Naive thymus-derived CD4-positive, alpha-beta T cell (primary cell): ENCODE measurements at regions of chr11 and their contacts with region 1.

Region 1: DNA sequence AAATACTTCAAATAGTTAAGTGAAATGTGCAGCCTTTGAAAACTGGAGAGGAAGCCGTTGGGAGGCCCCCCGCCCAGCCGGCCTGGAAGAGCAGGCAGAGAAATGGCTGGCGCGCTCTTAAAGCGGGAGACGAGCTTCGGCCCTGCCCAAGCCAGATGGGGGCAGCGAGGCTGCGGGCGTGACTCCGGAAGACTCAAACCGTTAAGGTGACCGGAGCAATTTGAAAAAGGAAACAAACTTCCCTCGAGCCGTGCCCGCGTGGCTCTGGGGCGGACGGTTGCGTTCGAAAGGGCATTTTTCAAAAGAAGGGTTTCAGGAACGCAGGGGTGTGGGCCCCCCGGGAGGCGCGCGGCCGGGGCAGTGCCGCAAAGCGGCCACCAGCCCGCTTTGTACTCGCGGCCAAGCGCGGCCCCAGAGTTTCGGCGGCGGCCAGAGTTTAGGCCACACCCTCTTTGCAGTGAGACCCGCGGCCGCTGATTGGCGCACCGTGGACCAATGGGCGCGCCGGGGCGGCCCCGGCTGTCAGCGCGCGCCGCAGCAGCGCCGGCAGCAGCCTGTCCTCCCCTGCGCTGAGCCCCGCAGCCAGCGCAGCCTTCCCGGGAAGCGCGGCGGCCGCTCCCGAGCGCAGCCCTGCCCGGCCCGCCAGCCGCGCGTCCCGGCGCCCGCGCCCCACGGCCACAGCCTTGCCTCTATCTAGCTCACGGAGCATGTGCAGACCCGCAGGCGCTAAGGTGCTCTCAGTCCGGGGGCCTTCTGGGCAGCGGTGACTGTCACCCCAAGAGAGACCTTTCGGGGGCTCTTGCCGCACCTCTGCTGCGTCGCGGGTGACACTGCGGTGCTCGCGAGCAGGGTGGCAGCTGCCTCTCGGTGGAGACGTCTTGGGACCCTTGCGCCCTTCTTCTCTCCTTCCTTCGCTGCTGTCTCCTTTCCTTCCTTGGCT is at the start of gene NAV2:
- DNase-seq: peak; percentile 43 to 80 (median 62)
- ATAC-seq: peak; percentile 98
- H3K4me3 ChIP-seq: peak within 1 kb of the TSS; percentile 81
- H3K4me3 Mint-ChIP-seq: peak within 1 kb of the TSS; percentile 91 to 98 (median 94)
- H3K27ac ChIP-seq: peak within 1 kb of the TSS; percentile 24
- H3K27ac Mint-ChIP-seq: peak within 1 kb of the TSS; percentile 63 to 87 (median 77)
- H3K4me1 ChIP-seq: peaks cover 14 to 18% of the 10 kb centered on the region in 2 donors
- H3K4me1 Mint-ChIP-seq: peaks cover 6 to 27% (median 24%) of the 10 kb centered on the region in 7 donors
- H3K27me3 ChIP-seq: peaks cover 14% of the 10 kb centered on the region in 2 donors
- H3K27me3 Mint-ChIP-seq: peaks cover 23 to 69% (median 33%) of the 10 kb centered on the region in 5 donors
- total RNA-seq, gene NAV2: 0.24 to 2.2 (median 0.48) TPM

Region 2: DNA sequence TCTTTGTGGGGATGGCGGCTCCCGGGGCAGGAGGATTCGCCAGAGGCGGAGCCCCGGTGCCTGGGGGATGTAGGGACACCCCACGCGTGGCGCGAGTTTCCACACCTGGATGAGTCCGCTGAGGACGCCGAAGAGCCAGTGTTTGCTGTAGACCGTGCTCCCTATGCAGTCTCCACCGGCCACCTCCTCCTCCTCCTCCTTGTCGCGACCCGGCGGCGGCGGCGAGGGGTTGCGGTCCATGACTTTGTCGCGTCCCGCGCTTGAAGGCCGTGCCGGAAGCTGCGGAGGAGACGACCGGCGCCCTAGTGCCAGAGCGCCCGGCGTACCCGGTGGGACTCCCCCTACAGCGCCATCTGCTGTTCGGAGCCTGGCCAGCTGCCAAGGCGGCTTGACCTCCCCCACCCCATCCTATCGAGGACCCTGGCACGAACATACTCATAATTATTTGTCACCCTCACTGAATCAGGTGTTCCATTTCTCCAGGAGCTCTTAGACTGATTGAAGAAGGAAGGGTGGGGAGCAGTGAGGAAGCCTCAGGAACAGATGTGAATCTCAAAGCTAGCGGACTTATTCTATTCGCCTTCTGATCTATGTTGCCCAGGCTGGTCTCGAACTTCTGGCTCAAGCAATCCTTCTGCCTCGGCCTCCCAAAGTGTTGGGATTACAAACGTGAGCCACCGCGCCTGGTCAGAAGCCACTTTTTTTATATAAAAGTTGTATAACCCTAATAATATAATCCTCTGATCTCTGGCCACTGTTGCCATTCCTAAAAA is 1606.6 kb before region 1 on chr11 and contains the start of gene SAAL1:
- CTCF ChIA-PET with region 1: no interaction called
- POLR2A ChIA-PET with region 1: no interaction called
- intact Hi-C with region 1: loop called in 1 of 2 experiments (anchors 10 kb)
- DNase-seq: peak; percentile 80 to 95 (median 84)
- ATAC-seq: peak; percentile 99
- H3K4me3 ChIP-seq: peak within 1 kb of the TSS; percentile 93
- H3K4me3 Mint-ChIP-seq: peak within 1 kb of the TSS; percentile 84 to 95 (median 93)
- H3K27ac ChIP-seq: peak within 1 kb of the TSS; percentile 78
- H3K27ac Mint-ChIP-seq: peak within 1 kb of the TSS; percentile 77 to 93 (median 90)
- H3K4me1 ChIP-seq: peaks cover 14 to 15% of the 10 kb centered on the region in 2 donors
- H3K4me1 Mint-ChIP-seq: peaks cover 21 to 54% (median 42%) of the 10 kb centered on the region in 7 donors
- H3K27me3 ChIP-seq: no peaks in the 10 kb centered on the region
- H3K27me3 Mint-ChIP-seq: peaks cover 0 to 15% (median 0%) of the 10 kb centered on the region in 5 donors
- total RNA-seq, gene SAAL1: 16.0 to 25.3 (median 19.3) TPM

Region 3: DNA sequence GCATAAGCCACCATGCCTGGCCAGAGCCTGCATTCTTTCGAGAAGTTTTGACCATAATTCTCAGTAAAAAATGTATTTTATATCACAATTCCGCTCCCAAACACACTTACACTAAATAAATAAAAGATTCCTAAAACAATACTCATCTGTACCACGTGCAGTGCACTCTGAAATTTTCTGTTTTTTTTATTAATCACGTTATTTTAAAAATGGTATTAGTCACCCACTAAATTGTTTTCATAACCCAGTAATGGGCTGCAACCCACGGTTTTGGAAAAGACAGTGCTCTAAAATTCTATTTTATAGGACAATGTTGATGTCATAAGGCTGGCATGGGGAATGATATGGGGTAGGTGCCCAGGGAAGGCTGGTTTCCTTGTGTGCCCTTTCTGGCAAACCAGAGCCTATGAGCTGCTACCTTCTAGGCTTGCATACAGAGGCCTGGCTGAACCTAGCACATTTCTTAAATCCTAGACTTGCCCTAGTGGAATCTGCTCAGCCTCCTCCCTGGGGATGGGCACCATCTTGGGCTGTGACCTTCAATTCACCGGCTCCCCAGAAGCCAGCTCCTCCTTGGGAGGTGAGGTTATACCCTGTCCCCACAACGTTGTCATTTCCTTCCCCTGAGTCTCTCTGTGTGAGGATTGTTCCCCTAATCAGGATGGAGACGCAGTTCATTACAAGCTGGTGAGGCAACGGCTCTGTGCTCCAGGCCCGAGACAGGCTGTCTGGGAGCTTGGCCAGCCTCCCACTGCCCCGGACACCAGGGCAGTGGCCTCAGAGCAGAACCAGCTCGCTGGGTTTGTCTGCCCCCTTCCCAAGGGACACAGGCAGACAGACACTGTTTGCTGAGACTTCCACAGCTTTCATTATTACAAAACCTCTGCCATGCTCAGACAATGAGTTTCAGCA is 116.5 kb before region 1 on chr11:
- CTCF ChIA-PET with region 1: no interaction called
- POLR2A ChIA-PET with region 1: no interaction called
- intact Hi-C with region 1: no loop called
- DNase-seq: no peak
- ATAC-seq: no peak
- H3K4me3 ChIP-seq: no peak overlapping the region
- H3K4me3 Mint-ChIP-seq: no peak overlapping the region
- H3K27ac ChIP-seq: no peak overlapping the region
- H3K27ac Mint-ChIP-seq: no peak overlapping the region
- H3K4me1 ChIP-seq: no peaks in the 10 kb centered on the region
- H3K4me1 Mint-ChIP-seq: no peaks in the 10 kb centered on the region
- H3K27me3 ChIP-seq: no peaks in the 10 kb centered on the region
- H3K27me3 Mint-ChIP-seq: peaks cover 0 to 29% (median 21%) of the 10 kb centered on the region in 5 donors

Region 4: DNA sequence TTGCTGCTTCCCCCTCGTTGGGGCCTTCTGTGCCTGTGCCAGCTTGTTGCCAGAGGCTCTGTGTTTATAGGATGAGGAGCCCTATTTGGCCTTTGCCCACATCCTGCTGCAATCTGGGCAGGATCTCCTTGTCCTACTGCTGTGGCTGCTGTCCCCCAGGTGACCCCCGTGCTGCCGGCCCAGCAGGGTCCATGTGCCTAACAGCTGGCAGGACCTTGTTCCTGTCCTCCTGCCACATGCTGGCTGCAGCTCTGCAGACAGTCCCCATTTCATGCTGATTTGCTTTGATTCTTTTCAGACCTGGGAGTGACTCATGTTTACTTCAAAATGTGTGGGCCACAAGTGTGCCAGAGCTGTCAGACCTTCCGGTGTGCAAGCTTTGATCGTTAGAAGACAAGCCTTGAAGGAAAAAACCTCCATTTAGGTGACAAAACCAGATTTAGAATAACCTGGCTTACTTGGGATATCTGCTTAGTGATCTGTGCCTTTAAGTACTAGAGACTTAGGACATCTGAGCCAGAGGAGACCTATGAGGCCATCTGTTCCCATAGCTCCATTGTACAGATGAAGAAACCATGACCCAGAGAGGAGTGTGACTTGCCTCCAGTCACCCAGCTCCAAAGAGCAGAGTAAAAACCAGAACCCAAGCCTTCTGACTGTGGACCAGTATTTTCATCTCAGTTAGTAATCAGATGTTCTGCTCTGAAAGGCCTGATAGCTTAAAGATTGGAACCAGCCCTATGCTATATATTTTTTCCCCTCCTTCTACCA is 11.2 kb after region 1 on chr11:
- CTCF ChIA-PET with region 1: no interaction called
- POLR2A ChIA-PET with region 1: interaction called, 5 read pairs
- intact Hi-C with region 1: loop called (anchors 1 kb)
- DNase-seq: peak in 5 of 9 donors; percentile 7 to 34 (median 19)
- ATAC-seq: peak; percentile 80
- H3K4me3 ChIP-seq: no peak overlapping the region
- H3K4me3 Mint-ChIP-seq: peak overlapping the region in 8 of 10 donors; percentile 4 to 66 (median 38)
- H3K27ac ChIP-seq: no peak overlapping the region
- H3K27ac Mint-ChIP-seq: peak overlapping the region; percentile 34 to 92 (median 75)
- H3K4me1 ChIP-seq: peaks cover 17 to 25% of the 10 kb centered on the region in 2 donors
- H3K4me1 Mint-ChIP-seq: peaks cover 16 to 30% (median 21%) of the 10 kb centered on the region in 7 donors
- H3K27me3 ChIP-seq: no peaks in the 10 kb centered on the region
- H3K27me3 Mint-ChIP-seq: peaks cover 0 to 25% (median 0%) of the 10 kb centered on the region in 5 donors

Region 5: DNA sequence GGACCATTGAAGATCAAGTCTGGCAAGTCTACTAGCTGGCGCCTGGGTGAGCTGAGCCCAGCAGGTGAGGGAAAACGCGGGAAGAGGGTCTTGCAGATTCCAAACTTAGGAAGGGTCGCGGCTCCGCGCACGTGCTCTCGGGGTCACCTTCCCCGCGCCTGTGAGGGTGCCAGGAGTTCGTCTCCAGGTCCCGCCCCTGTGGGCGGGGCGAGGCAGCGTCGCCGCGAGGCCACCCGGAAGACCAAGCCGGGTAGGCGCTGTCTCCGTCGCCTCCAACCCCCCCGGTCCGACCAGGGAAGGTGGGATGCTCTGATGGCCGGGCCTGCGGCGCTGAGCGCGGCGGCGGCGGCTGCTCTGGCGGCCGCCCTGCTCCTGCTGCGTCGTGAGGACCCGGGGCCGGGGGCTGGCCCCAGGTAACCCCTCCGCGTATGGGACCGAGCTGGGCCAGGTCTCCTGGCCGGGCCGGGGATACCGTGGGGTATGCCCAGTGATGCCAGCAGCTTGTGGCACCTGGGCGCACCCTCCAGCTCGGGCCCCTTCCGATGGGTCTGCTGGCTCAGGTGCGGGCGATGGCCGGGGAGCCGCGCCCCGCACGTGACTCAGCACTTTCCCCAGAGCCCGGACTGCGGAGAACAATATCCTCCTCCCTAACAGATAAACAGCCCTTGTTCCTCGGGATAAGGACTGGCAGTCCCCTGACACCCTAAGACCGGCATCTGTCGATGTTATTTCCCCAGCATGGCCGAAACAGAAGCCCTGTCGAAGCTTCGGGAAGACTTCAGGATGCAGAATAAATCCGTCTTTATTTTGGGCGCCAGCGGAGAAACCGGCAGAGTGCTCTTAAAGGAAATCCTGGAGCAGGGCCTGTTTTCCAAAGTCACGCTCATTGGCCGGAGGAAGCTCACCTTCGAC is 651.2 kb after region 1 on chr11 and contains the start of gene HTATIP2:
- CTCF ChIA-PET with region 1: no interaction called
- POLR2A ChIA-PET with region 1: no interaction called
- intact Hi-C with region 1: loop called in 1 of 2 experiments (anchors 10 kb)
- DNase-seq: peak; percentile 62 to 78 (median 72)
- ATAC-seq: peak; percentile 92
- H3K4me3 ChIP-seq: peak within 1 kb of the TSS; percentile 73
- H3K4me3 Mint-ChIP-seq: peak within 1 kb of the TSS; percentile 88 to 96 (median 94)
- H3K27ac ChIP-seq: peak within 1 kb of the TSS; percentile 77
- H3K27ac Mint-ChIP-seq: peak within 1 kb of the TSS; percentile 87 to 97 (median 93)
- H3K4me1 ChIP-seq: peaks cover 27 to 29% of the 10 kb centered on the region in 2 donors
- H3K4me1 Mint-ChIP-seq: peaks cover 33 to 75% (median 72%) of the 10 kb centered on the region in 7 donors
- H3K27me3 ChIP-seq: no peaks in the 10 kb centered on the region
- H3K27me3 Mint-ChIP-seq: no peaks in the 10 kb centered on the region
- total RNA-seq, gene HTATIP2: 12.0 to 47.1 (median 38.6) TPM